Stomach (tissue), 19 donors: ENCODE measurements at regions of chr20 and their contacts with region 1.

Region 1: GRCh38 chr20:62500237-62500864 is 24.6 kb upstream of the GATA5 start:
- DNase-seq: peak; percentile 85 to 88
- H3K4me3 ChIP-seq: no peak overlapping the region
- H3K27ac ChIP-seq: no peak overlapping the region
- H3K4me1 ChIP-seq: peaks cover 11 to 31% (median 25%) of the 10 kb centered on the region in 4 donors
- H3K27me3 ChIP-seq: peaks cover 0 to 24% (median 0%) of the 10 kb centered on the region in 3 donors
- CTCF ChIP-seq: peak in 5 of 7 experiments; percentile 83 to 95 (median 92)
- EP300 ChIP-seq: no peak
- POLR2A ChIP-seq: no peak

Region 2: GRCh38 chr20:62616728-62617621 is 116.6 kb after region 1 on chr20:
- intact Hi-C with region 1: loop called (anchors 5 kb)
- DNase-seq: peak; percentile 84 to 89
- H3K4me3 ChIP-seq: no peak overlapping the region
- H3K27ac ChIP-seq: peak overlapping the region; percentile 26 to 78 (median 69)
- H3K4me1 ChIP-seq: peaks cover 7 to 42% (median 30%) of the 10 kb centered on the region in 4 donors
- H3K27me3 ChIP-seq: peaks cover 0 to 8% (median 0%) of the 10 kb centered on the region in 3 donors
- CTCF ChIP-seq: peak in 5 of 7 experiments; percentile 89 to 99 (median 95)
- EP300 ChIP-seq: no peak
- POLR2A ChIP-seq: no peak

Region 3: GRCh38 chr20:62752671-62753501 is 252.5 kb after region 1 on chr20:
- intact Hi-C with region 1: no loop called
- DNase-seq: no peak
- H3K4me3 ChIP-seq: no peak overlapping the region
- H3K27ac ChIP-seq: peak overlapping the region in 3 of 5 donors; percentile 0 to 46 (median 40)
- H3K4me1 ChIP-seq: peaks cover 9 to 15% (median 11%) of the 10 kb centered on the region in 4 donors
- H3K27me3 ChIP-seq: peaks cover 0 to 17% (median 0%) of the 10 kb centered on the region in 3 donors
- CTCF ChIP-seq: no peak
- EP300 ChIP-seq: no peak
- POLR2A ChIP-seq: no peak

Region 4: DNA sequence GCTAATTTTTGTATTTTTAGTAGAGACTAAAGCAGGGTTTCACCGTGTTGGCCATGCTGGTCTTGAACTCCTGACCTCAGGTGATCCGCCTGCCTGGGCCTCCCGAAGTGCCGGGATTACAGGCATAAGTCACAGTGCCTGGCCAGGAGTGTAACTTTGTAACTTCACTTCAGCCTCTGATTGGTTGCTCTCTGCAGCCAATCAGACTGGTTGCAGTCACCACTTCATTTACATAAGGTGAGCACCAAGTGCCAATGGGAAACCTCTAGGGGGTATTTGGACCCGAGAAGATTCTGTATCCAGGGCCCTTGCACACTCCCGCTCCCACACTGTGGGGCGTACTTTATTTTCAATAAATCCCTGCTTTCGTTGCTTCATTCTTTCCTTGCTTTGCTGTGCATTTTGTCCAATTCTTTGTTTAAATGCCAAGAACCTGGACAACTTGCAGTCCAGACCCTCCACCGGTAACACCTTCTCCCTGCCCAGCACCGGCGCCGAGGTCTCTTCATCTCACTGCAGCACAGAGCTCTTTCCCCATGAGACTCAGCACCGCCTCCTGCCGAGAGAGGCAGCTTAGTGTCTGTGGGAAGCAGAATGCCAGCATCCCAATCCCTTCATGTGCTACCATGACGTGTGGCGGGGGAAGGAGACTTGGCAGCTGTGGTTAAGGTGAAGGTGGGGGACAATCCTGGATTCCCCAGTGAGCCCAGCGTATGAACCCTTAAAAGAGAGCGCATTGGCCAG is 282.0 kb after region 1 on chr20:
- intact Hi-C with region 1: loop called (anchors 10 kb)
- DNase-seq: no peak
- H3K4me3 ChIP-seq: no peak overlapping the region
- H3K27ac ChIP-seq: no peak overlapping the region
- H3K4me1 ChIP-seq: peaks cover 0 to 7% (median 0%) of the 10 kb centered on the region in 4 donors
- H3K27me3 ChIP-seq: peaks cover 0 to 26% (median 0%) of the 10 kb centered on the region in 3 donors
- CTCF ChIP-seq: no peak
- EP300 ChIP-seq: no peak
- POLR2A ChIP-seq: no peak